SK-N-SH (cell line): ENCODE measurements at regions of chr18 and their contacts with region 1.

Region 1: GRCh38 chr18:59899298-59900221 is at the start of gene PMAIP1:
- DNase-seq: peak; percentile 96
- H3K4me3 ChIP-seq: peak within 1 kb of the TSS; percentile 83
- H3K27ac ChIP-seq: peak within 1 kb of the TSS; percentile 91 to 95
- H3K4me1 ChIP-seq: peaks cover 18% of the 10 kb centered on the region in 2 experiments; a peak in 3 of 4 replicates
- H3K27me3 ChIP-seq: no peaks in the 10 kb centered on the region
- CTCF ChIP-seq: no peak
- EP300 ChIP-seq: peak in 1 of 2 experiments; percentile 29; a peak in 1 of 4 replicates
- RAD21 ChIP-seq: no peak
- polyA plus RNA-seq, gene PMAIP1: 74.5 and 76.9 TPM in 2 replicates

Region 2: GRCh38 chr18:59918320-59918755 is 18.8 kb after region 1 on chr18:
- CTCF ChIA-PET with region 1: no interaction called
- POLR2A ChIA-PET with region 1: interaction called, 10 read pairs
- DNase-seq: peak; percentile 49
- H3K4me3 ChIP-seq: peak overlapping the region in 1 of 2 experiments; percentile 31; a peak in 1 of 4 replicates
- H3K27ac ChIP-seq: peak overlapping the region; percentile 45 to 47
- H3K4me1 ChIP-seq: peaks cover 8 to 18% of the 10 kb centered on the region in 2 experiments; a peak in 3 of 4 replicates
- H3K27me3 ChIP-seq: no peaks in the 10 kb centered on the region
- CTCF ChIP-seq: no peak
- EP300 ChIP-seq: peak in 1 of 2 experiments; percentile 45; a peak in 2 of 4 replicates
- RAD21 ChIP-seq: peak; percentile 20

Region 3: DNA sequence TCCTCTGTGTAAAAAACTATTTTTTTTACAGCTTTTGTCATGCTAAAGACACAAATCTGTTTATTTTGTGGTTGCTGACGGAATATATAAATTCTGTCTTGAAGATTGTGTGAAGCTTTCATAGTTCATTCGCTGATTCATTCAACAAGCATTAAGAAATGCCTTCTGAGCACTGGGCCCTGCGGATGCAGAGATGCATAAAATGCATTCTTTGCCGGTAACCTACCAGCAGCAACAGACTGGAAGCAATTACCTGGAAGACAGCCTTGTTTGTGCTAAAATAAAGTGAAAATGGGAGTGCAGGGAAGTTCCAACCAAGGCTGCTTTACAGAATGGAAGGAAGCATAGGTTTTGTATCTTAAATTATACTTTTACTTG is 119.9 kb after region 1 on chr18:
- CTCF ChIA-PET with region 1: no interaction called
- POLR2A ChIA-PET with region 1: no interaction called
- DNase-seq: no peak
- H3K4me3 ChIP-seq: no peak overlapping the region
- H3K27ac ChIP-seq: peak overlapping the region in 1 of 2 experiments; percentile 34; a peak in 1 of 4 replicates
- H3K4me1 ChIP-seq: peaks cover 0 to 44% of the 10 kb centered on the region in 2 experiments; a peak in 3 of 4 replicates
- H3K27me3 ChIP-seq: no peaks in the 10 kb centered on the region
- CTCF ChIP-seq: no peak
- EP300 ChIP-seq: peak in 1 of 2 experiments; percentile 61; a peak in 1 of 4 replicates
- RAD21 ChIP-seq: no peak

Region 4: GRCh38 chr18:60090170-60090569 is 190.6 kb after region 1 on chr18:
- CTCF ChIA-PET with region 1: no interaction called
- POLR2A ChIA-PET with region 1: no interaction called
- DNase-seq: no peak
- H3K4me3 ChIP-seq: no peak overlapping the region
- H3K27ac ChIP-seq: no peak overlapping the region
- H3K4me1 ChIP-seq: no peaks in the 10 kb centered on the region
- H3K27me3 ChIP-seq: no peaks in the 10 kb centered on the region
- CTCF ChIP-seq: no peak
- EP300 ChIP-seq: no peak
- RAD21 ChIP-seq: peak; percentile 30; the same call in 1 of the 2 replicates